ENCODE measurements at regions of chr2 and their contacts with region 1.

Region 1: DNA sequence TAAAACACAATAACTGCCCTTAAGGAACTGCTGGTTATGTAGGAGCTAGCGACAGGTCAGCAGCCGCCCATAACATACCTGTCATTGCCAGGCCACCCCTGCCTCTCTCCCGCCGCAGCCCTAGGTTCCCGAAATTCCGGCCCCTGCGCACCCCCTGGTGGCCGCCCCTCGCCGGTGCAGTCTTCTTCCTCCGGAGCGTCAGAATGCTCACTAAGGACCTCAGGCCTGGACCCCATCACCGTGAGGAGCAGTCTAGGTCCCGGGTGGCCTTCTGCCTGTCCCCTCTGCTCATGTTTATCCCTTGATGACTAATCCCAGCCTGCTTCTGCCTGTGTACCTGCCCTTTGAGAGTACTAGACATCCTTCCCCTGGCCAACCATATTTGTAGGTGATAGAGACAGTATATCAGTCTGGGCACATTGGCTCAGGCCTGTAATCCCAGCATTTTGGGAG is 115.7 kb upstream of the SLC1A4 start:
- DNase-seq: peak; percentile 51
- ATAC-seq: peak; percentile 92
- H3K4me3 ChIP-seq: no peak overlapping the region
- H3K27ac ChIP-seq: no peak overlapping the region
- H3K4me1 ChIP-seq: peaks cover 8 to 32% of the 10 kb centered on the region in 2 experiments
- H3K27me3 ChIP-seq: no peaks in the 10 kb centered on the region
- CTCF ChIP-seq: peak; percentile 74 to 92 (median 91)
- POLR2A ChIP-seq: no peak
- RAD21 ChIP-seq: peak; percentile 96

Region 2: DNA sequence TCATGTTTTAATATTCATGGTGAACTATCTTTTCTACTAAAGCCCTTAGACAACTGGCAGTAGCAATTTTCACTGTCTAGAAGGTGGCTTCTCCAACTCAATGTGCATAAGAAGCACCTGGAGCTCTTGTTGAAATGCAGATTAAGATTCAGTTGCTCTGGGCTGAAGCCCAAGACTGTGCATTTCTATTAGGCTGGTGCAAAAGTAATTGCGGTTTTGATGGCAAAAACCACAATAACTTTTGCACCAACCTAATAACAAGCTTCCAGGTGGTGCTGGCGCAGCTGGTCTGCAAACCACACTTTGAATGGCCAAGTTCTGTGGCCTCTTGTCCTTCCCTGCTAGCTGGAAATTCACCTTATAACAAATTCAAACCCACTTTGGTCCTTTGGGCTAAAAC is 827.6 kb before region 1 on chr2:
- CTCF ChIA-PET with region 1: no interaction called
- POLR2A ChIA-PET with region 1: no interaction called
- RAD21 ChIA-PET with region 1: no interaction called
- intact Hi-C with region 1: loop called (anchors 5 kb)
- DNase-seq: no peak
- ATAC-seq: no peak
- H3K4me3 ChIP-seq: no peak overlapping the region
- H3K27ac ChIP-seq: no peak overlapping the region
- H3K4me1 ChIP-seq: peaks cover 0 to 6% of the 10 kb centered on the region in 2 experiments; a peak in 1 of 4 replicates
- H3K27me3 ChIP-seq: no peaks in the 10 kb centered on the region
- CTCF ChIP-seq: no peak
- POLR2A ChIP-seq: no peak
- RAD21 ChIP-seq: no peak

Region 3: GRCh38 chr2:64523666-64524603 is 349.6 kb before region 1 on chr2 and contains the start of gene AFTPH:
- CTCF ChIA-PET with region 1: interaction called, 5 read pairs
- POLR2A ChIA-PET with region 1: interaction called, 3 read pairs
- RAD21 ChIA-PET with region 1: no interaction called
- intact Hi-C with region 1: loop called (anchors 2 kb)
- DNase-seq: peak; percentile 96
- ATAC-seq: peak; percentile 95
- H3K4me3 ChIP-seq: peak within 1 kb of the TSS; percentile 70 to 91
- H3K27ac ChIP-seq: peak within 1 kb of the TSS; percentile 78
- H3K4me1 ChIP-seq: peaks cover 6 to 20% of the 10 kb centered on the region in 2 experiments; a peak in 3 of 4 replicates
- H3K27me3 ChIP-seq: no peaks in the 10 kb centered on the region
- CTCF ChIP-seq: no peak
- POLR2A ChIP-seq: peak; percentile 75
- RAD21 ChIP-seq: no peak
- total RNA-seq, gene AFTPH: 23.6 TPM

Region 4: GRCh38 chr2:64586883-64587481 is 286.5 kb before region 1 on chr2:
- CTCF ChIA-PET with region 1: interaction called, 5 read pairs
- POLR2A ChIA-PET with region 1: no interaction called
- RAD21 ChIA-PET with region 1: no interaction called
- intact Hi-C with region 1: loop called (anchors 1 kb)
- DNase-seq: peak; percentile 34
- ATAC-seq: peak; percentile 77
- H3K4me3 ChIP-seq: no peak overlapping the region
- H3K27ac ChIP-seq: no peak overlapping the region
- H3K4me1 ChIP-seq: no peaks in the 10 kb centered on the region
- H3K27me3 ChIP-seq: no peaks in the 10 kb centered on the region
- CTCF ChIP-seq: peak; percentile 56 to 73 (median 72); a peak in 5 of 6 replicates
- POLR2A ChIP-seq: no peak
- RAD21 ChIP-seq: peak; percentile 84

Region 5: GRCh38 chr2:64595397-64596160 is 277.9 kb before region 1 on chr2:
- CTCF ChIA-PET with region 1: interaction called, 3 read pairs
- POLR2A ChIA-PET with region 1: no interaction called
- RAD21 ChIA-PET with region 1: no interaction called
- intact Hi-C with region 1: loop called (anchors 2 kb)
- DNase-seq: peak; percentile 27
- ATAC-seq: peak; percentile 73
- H3K4me3 ChIP-seq: no peak overlapping the region
- H3K27ac ChIP-seq: no peak overlapping the region
- H3K4me1 ChIP-seq: no peaks in the 10 kb centered on the region; a peak in 1 of 4 replicates
- H3K27me3 ChIP-seq: no peaks in the 10 kb centered on the region
- CTCF ChIP-seq: peak; percentile 40 to 84 (median 52)
- POLR2A ChIP-seq: no peak
- RAD21 ChIP-seq: peak; percentile 91